ENCODE measurements at regions of chr5 and their contacts with region 1.

Region 1: GRCh38 chr5:132500931-132501630 is 10.5 kb upstream of the IRF1 start:
- DNase-seq: peak; percentile 92
- ATAC-seq: peak; percentile 53
- H3K4me3 ChIP-seq: no peak overlapping the region
- H3K4me3 Mint-ChIP-seq: no peak overlapping the region
- H3K27ac ChIP-seq: peak overlapping the region; percentile 78 to 85
- H3K27ac Mint-ChIP-seq: peak overlapping the region; percentile 97
- H3K4me1 ChIP-seq: peaks cover 19 to 27% of the 10 kb centered on the region in 2 donors
- H3K4me1 Mint-ChIP-seq: peaks cover 37% of the 10 kb centered on the region
- H3K27me3 ChIP-seq: no peaks in the 10 kb centered on the region
- H3K27me3 Mint-ChIP-seq: no peaks in the 10 kb centered on the region
- CTCF ChIP-seq: peak; percentile 90

Region 2: GRCh38 chr5:132073231-132074013 is 427.7 kb before region 1 on chr5 and contains the start of gene CSF2:
- CTCF ChIA-PET with region 1: no interaction called
- POLR2A ChIA-PET with region 1: no interaction called
- intact Hi-C with region 1: no loop called
- DNase-seq: no peak
- ATAC-seq: no peak
- H3K4me3 ChIP-seq: no peak within 1 kb of the TSS
- H3K4me3 Mint-ChIP-seq: no peak within 1 kb of the TSS
- H3K27ac ChIP-seq: no peak within 1 kb of the TSS
- H3K27ac Mint-ChIP-seq: no peak within 1 kb of the TSS
- H3K4me1 ChIP-seq: no peaks in the 10 kb centered on the region
- H3K4me1 Mint-ChIP-seq: no peaks in the 10 kb centered on the region
- H3K27me3 ChIP-seq: no peaks in the 10 kb centered on the region
- H3K27me3 Mint-ChIP-seq: no peaks in the 10 kb centered on the region
- CTCF ChIP-seq: no peak
- total RNA-seq, gene CSF2: 0.41 TPM in 1 of 2 replicates, not detected in the other

Region 3: GRCh38 chr5:132238169-132238744 is 262.8 kb before region 1 on chr5:
- CTCF ChIA-PET with region 1: interaction called, 21 read pairs
- POLR2A ChIA-PET with region 1: no interaction called
- intact Hi-C with region 1: loop called (anchors 1 kb)
- DNase-seq: peak; percentile 78
- ATAC-seq: peak; percentile 80
- H3K4me3 ChIP-seq: no peak overlapping the region
- H3K4me3 Mint-ChIP-seq: no peak overlapping the region
- H3K27ac ChIP-seq: no peak overlapping the region
- H3K27ac Mint-ChIP-seq: no peak overlapping the region
- H3K4me1 ChIP-seq: no peaks in the 10 kb centered on the region
- H3K4me1 Mint-ChIP-seq: no peaks in the 10 kb centered on the region
- H3K27me3 ChIP-seq: no peaks in the 10 kb centered on the region
- H3K27me3 Mint-ChIP-seq: peaks cover 4% of the 10 kb centered on the region
- CTCF ChIP-seq: peak; percentile 89

Region 4: GRCh38 chr5:132410451-132411381 is 90.4 kb before region 1 on chr5:
- CTCF ChIA-PET with region 1: interaction called, 68 read pairs
- POLR2A ChIA-PET with region 1: interaction called, 57 read pairs
- intact Hi-C with region 1: loop called (anchors 1 kb)
- DNase-seq: peak; percentile 94
- ATAC-seq: peak; percentile 81
- H3K4me3 ChIP-seq: peak overlapping the region; percentile 71 to 93 (median 78)
- H3K4me3 Mint-ChIP-seq: peak overlapping the region; percentile 98
- H3K27ac ChIP-seq: peak overlapping the region; percentile 96 to 97
- H3K27ac Mint-ChIP-seq: peak overlapping the region; percentile 99
- H3K4me1 ChIP-seq: peaks cover 61 to 63% of the 10 kb centered on the region in 2 donors
- H3K4me1 Mint-ChIP-seq: peaks cover 68% of the 10 kb centered on the region
- H3K27me3 ChIP-seq: no peaks in the 10 kb centered on the region
- H3K27me3 Mint-ChIP-seq: no peaks in the 10 kb centered on the region
- CTCF ChIP-seq: peak; percentile 77

Region 5: DNA sequence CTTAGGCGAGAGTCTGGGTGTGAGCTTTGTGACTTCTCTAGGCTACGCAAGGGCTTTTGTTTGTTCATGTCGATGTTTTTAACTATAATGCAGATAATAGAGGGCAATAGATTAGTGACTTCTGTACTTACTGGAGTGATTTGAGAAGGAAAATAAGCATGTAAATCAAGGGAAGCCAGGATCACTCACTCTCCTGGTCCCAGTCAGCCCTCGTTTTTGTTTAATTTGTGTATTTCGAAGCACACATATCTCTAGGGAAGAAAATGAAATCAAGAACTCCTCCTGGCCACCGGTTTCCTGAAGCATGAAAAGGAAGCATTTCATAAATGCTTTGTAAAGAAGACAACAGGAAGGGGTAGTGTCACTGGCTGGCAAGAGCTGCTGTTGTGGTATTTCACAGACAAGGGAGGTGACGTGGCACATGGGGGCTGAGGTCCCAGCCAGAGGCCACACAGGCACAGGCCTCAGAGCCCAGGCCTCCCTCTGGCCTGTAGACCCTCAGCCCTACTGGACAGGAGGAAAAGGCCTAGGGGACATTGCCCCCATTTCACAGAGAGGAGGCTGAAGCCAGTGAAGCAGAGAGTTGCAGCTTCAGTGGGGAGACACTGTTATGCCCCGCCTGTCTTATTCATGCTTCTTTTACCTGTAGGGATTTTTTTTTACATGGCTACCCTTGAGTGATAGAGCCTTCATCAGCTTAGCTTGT is 44.6 kb before region 1 on chr5:
- CTCF ChIA-PET with region 1: interaction called, 22 read pairs
- POLR2A ChIA-PET with region 1: interaction called, 59 read pairs
- intact Hi-C with region 1: no loop called
- DNase-seq: peak; percentile 84
- ATAC-seq: peak; percentile 78
- H3K4me3 ChIP-seq: peak overlapping the region; percentile 12 to 53 (median 30)
- H3K4me3 Mint-ChIP-seq: peak overlapping the region; percentile 74
- H3K27ac ChIP-seq: peak overlapping the region; percentile 88 to 93
- H3K27ac Mint-ChIP-seq: peak overlapping the region; percentile 99
- H3K4me1 ChIP-seq: peaks cover 79 to 84% of the 10 kb centered on the region in 2 donors
- H3K4me1 Mint-ChIP-seq: peaks cover 92% of the 10 kb centered on the region
- H3K27me3 ChIP-seq: no peaks in the 10 kb centered on the region
- H3K27me3 Mint-ChIP-seq: no peaks in the 10 kb centered on the region
- CTCF ChIP-seq: no peak

Region 6: DNA sequence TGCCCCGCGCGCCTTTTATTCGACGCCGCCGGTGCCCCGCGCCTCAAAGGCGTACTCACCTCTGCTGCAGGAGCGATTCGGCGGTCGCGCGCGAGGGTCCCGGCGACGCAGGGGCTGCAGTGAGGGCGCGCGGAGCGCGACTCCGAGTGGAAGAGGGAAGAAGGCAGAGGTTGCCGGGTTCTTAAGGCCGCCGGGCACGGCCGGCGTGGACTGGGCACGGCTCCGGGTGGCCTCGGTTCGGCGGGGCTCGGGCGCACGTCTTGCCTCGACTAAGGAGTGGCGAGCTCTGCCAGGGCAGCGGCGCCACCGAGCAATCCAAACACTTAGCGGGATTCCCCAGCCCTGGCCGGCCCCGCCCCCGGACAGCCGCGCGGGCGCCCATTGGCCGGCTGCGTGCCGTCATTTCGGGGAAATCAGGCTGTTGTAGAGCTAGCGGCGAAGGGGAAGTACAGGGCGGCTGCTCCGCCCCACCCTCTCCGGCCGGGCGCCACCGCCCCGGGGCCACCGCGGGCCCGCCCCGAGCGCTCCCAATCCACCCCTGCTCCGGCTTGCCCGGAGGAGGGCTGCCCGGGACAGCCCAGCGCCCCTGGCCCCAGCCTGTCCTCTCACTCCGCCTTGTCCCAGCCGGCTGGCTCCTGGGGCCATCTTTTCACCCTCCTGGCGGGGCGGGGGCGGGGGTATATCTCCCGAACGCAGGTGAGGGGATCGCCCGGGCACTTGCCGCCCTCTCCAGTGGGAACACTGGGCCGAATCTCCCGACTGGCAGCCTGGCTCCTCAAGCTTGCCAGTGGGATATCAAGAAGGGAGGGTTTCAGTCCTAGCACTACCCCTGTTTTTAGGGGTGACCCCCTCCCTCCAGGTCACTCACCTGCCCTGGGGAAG is 10.4 kb before region 1 on chr5 and contains the start of gene IRF1:
- CTCF ChIA-PET with region 1: interaction called, 78 read pairs
- POLR2A ChIA-PET with region 1: interaction called, 29 read pairs
- intact Hi-C with region 1: loop called (anchors 1 kb)
- DNase-seq: peak; percentile 98
- ATAC-seq: peak; percentile 70
- H3K4me3 ChIP-seq: peak within 1 kb of the TSS; percentile 81 to 99 (median 89)
- H3K4me3 Mint-ChIP-seq: peak within 1 kb of the TSS; percentile 96
- H3K27ac ChIP-seq: peak within 1 kb of the TSS; percentile 99
- H3K27ac Mint-ChIP-seq: peak within 1 kb of the TSS; percentile 96
- H3K4me1 ChIP-seq: peaks cover 74 to 81% of the 10 kb centered on the region in 2 donors
- H3K4me1 Mint-ChIP-seq: peaks cover 76% of the 10 kb centered on the region
- H3K27me3 ChIP-seq: no peaks in the 10 kb centered on the region
- H3K27me3 Mint-ChIP-seq: no peaks in the 10 kb centered on the region
- CTCF ChIP-seq: no peak
- total RNA-seq, gene IRF1: 304 and 306 TPM in 2 replicates

Region 7: DNA sequence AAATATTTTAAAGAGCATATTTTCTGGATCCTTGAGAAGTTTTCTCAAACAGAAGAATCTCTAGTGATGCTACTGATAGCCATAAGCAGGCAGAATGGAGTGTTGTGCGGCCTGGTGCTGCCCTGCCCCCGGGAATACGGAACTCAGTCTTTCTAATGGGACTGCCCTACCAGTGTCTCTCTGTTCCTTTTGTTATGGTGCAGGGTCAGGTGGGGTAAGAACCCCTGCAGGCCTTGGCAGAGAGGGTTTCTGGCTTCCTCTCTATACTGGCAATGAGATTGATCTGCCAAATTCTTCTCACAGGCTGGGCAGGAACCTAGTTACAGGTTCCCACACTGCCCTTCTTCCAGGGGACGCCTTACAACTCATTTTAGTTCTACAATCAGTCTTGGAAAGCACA is 39.7 kb after region 1 on chr5:
- CTCF ChIA-PET with region 1: no interaction called
- POLR2A ChIA-PET with region 1: no interaction called
- intact Hi-C with region 1: no loop called
- DNase-seq: no peak
- ATAC-seq: no peak
- H3K4me3 ChIP-seq: no peak overlapping the region
- H3K4me3 Mint-ChIP-seq: no peak overlapping the region
- H3K27ac ChIP-seq: no peak overlapping the region
- H3K27ac Mint-ChIP-seq: no peak overlapping the region
- H3K4me1 ChIP-seq: no peaks in the 10 kb centered on the region
- H3K4me1 Mint-ChIP-seq: no peaks in the 10 kb centered on the region
- H3K27me3 ChIP-seq: peaks cover 0 to 8% (median under 1%) of the 10 kb centered on the region in 4 experiments
- H3K27me3 Mint-ChIP-seq: peaks cover 17% of the 10 kb centered on the region
- CTCF ChIP-seq: no peak

Region 8: GRCh38 chr5:132866342-132867045 is 365.4 kb after region 1 on chr5 and contains the starts of genes GDF9 and UQCRQ:
- CTCF ChIA-PET with region 1: interaction called, 6 read pairs
- POLR2A ChIA-PET with region 1: no interaction called
- intact Hi-C with region 1: loop called (anchors 5 kb)
- DNase-seq: peak; percentile 97
- ATAC-seq: peak; percentile 99
- H3K4me3 ChIP-seq: peak within 1 kb of the TSS; percentile 67 to 93 (median 81)
- H3K4me3 Mint-ChIP-seq: peak within 1 kb of the TSS; percentile 93
- H3K27ac ChIP-seq: peak within 1 kb of the TSS; percentile 92 to 93
- H3K27ac Mint-ChIP-seq: peak within 1 kb of the TSS; percentile 98
- H3K4me1 ChIP-seq: peaks cover 16 to 19% of the 10 kb centered on the region in 2 donors
- H3K4me1 Mint-ChIP-seq: peaks cover 26% of the 10 kb centered on the region
- H3K27me3 ChIP-seq: no peaks in the 10 kb centered on the region
- H3K27me3 Mint-ChIP-seq: no peaks in the 10 kb centered on the region
- CTCF ChIP-seq: no peak
- total RNA-seq, gene GDF9: 0.51 and 0.67 TPM in 2 replicates
- total RNA-seq, gene UQCRQ: 78.5 and 90.0 TPM in 2 replicates